H1 (cell line): ENCODE measurements at regions of chr15 and their contacts with region 1.

Region 1: GRCh38 chr15:66851226-66852071 is 149.4 kb downstream of the SMAD6 start:
- DNase-seq: peak; percentile 54 to 90
- H3K4me3 ChIP-seq: no peak overlapping the region
- H3K27ac ChIP-seq: no peak overlapping the region
- H3K4me1 ChIP-seq: no peaks in the 10 kb centered on the region; a peak in 2 of 7 replicates
- H3K27me3 ChIP-seq: peaks cover 0 to 11% (median 6%) of the 10 kb centered on the region in 4 experiments; a peak in 5 of 7 replicates
- CTCF ChIP-seq: peak; percentile 95 to 97 (median 96)
- EP300 ChIP-seq: no peak
- POLR2A ChIP-seq: no peak
- RAD21 ChIP-seq: peak; percentile 80 to 90

Region 2: GRCh38 chr15:66588537-66588936 is 262.9 kb before region 1 on chr15:
- CTCF ChIA-PET with region 1: interaction called, 31 read pairs
- POLR2A ChIA-PET with region 1: no interaction called
- DNase-seq: peak in 1 of 2 experiments; percentile 83
- H3K4me3 ChIP-seq: peak overlapping the region in 3 of 4 experiments; percentile 6 to 44 (median 19); a peak in 4 of 8 replicates
- H3K27ac ChIP-seq: no peak overlapping the region
- H3K4me1 ChIP-seq: peaks cover 0 to 5% (median 3%) of the 10 kb centered on the region in 4 experiments; a peak in 4 of 7 replicates
- H3K27me3 ChIP-seq: 0 out of 7 replicates have a peak, but pooled peaks cover 0 to 2% (median 0%) of the 10 kb centered on the region in 4 experiments
- CTCF ChIP-seq: peak; percentile 76 to 88 (median 78)
- EP300 ChIP-seq: no peak
- POLR2A ChIP-seq: no peak
- RAD21 ChIP-seq: peak; percentile 71 to 79

Region 3: DNA sequence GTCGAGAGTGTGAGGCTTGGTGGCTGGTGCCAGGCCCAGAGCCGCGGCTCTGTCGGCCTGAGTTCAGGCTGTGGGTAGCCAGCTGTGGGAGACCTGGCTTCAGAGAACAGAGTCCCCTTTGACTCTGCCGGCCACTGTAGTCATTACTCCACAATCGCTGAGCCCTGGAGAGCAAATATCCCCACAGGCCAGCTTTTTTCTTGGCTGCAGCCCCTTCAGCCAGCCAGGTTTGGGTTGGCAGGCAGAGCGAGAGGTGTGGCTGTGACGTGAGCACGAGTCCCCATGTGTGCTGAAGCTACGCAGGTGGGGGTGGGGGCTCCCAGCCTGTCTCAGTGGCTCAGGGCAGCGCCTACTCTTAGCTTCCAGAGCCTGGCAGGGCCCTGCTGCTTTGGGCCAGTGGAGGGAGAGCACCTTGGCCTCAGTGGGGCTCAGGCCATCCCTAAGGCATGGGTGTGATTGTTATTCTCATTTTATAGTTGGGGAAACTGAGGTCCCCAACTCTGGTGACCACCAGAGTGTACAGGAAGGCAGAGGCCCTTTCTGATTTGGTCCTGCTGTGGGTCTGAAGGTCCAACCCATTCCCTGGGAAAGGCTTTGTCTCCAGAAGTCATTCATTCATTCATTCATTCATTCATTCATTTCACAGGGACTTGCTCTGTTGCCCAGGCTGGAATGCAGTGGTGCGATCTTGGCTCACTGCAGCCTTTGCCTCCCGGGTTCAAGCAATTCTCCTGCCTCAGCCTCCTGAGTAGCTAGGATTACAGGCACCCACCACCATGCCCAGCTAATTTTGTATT is 240.0 kb before region 1 on chr15:
- CTCF ChIA-PET with region 1: interaction called, 105 read pairs
- POLR2A ChIA-PET with region 1: no interaction called
- DNase-seq: no peak
- H3K4me3 ChIP-seq: no peak overlapping the region
- H3K27ac ChIP-seq: no peak overlapping the region
- H3K4me1 ChIP-seq: no peaks in the 10 kb centered on the region; a peak in 1 of 7 replicates
- H3K27me3 ChIP-seq: no peaks in the 10 kb centered on the region
- CTCF ChIP-seq: no peak
- EP300 ChIP-seq: no peak
- POLR2A ChIP-seq: no peak
- RAD21 ChIP-seq: no peak

Region 4: DNA sequence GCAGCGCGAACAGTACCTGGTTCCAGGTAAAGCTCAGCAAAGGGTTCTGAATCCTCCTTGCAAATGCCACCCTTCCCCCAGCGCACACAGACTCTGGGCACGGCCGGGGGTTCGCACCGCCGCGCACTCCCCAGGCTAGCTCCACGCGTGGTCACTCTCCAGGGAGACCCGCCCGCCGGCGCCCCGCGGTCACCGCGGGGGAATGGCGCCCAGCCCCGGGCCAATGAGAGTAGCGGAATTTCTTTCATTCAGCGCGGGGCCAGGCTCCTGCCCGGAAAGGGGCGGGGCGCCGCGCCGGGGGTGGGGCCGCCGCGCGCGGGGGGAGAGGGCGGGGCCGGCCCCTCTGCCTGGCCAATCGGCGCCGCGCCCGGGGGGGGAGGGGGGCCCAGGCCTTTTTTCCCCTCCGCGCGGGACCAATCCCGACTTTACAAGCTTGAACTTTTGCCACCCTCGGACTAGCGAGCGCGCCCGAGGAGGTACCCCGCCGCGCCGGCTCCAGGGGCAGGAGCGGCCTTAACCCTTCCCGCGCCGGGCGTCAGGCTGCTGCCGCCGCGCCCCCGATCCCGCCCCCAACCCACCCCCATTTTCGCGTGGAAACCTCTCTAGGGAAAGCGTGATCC is 150.5 kb before region 1 on chr15:
- CTCF ChIA-PET with region 1: interaction called, 57 read pairs
- POLR2A ChIA-PET with region 1: no interaction called
- DNase-seq: peak; percentile 65 to 94
- H3K4me3 ChIP-seq: peak overlapping the region; percentile 54 to 83 (median 70)
- H3K27ac ChIP-seq: no peak overlapping the region
- H3K4me1 ChIP-seq: peaks cover 0 to 22% (median 9%) of the 10 kb centered on the region in 4 experiments; a peak in 6 of 7 replicates
- H3K27me3 ChIP-seq: peaks cover 18 to 45% (median 35%) of the 10 kb centered on the region in 4 experiments; a peak in 6 of 7 replicates
- CTCF ChIP-seq: no peak
- EP300 ChIP-seq: no peak
- POLR2A ChIP-seq: no peak
- RAD21 ChIP-seq: no peak

Region 5: DNA sequence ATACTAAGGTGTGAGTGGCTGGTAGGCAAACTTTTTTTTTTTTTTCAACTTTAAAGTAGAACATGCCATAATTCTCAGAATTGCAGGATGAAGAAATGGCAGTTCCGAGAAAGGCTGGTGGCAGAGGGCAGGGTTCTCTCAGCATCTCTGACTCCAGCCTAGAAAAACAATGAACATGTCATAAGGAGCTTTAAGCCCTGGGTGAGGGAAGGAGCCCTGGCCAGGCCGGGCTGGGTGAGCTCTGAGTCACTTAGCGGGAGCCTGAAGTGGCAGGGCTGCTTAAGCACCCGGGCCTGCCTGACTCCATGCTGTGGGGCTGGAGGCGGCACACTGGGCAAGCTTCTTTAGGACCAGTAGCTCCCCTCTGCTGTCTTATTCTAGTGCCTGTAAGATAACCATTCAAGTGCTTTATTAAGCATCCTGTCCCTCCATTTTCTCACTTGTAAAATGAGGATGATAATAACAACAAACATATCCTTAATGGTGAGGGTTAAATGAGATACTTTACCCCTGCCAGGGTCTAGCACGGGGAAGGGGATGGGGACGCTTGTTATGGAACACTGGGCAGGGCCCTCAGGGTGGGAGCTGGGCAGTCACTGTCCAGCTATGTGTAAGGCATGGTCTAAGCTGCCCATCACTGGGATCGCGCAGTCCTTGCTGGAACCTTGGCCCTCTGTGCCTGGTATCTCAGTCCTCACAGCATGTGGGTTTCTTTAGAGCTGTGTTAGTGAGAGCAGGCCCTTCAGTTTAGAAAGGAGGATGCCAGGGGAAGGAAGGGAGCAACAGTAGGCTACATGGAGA is 131.0 kb before region 1 on chr15:
- CTCF ChIA-PET with region 1: interaction called, 27 read pairs
- POLR2A ChIA-PET with region 1: no interaction called
- DNase-seq: no peak
- H3K4me3 ChIP-seq: no peak overlapping the region
- H3K27ac ChIP-seq: no peak overlapping the region
- H3K4me1 ChIP-seq: peaks cover 0 to 4% (median 2%) of the 10 kb centered on the region in 4 experiments; a peak in 4 of 7 replicates
- H3K27me3 ChIP-seq: no peaks in the 10 kb centered on the region
- CTCF ChIP-seq: no peak
- EP300 ChIP-seq: no peak
- POLR2A ChIP-seq: no peak
- RAD21 ChIP-seq: no peak

Region 6: GRCh38 chr15:66803182-66803729 is 48.2 kb before region 1 on chr15:
- CTCF ChIA-PET with region 1: interaction called, 201 read pairs
- POLR2A ChIA-PET with region 1: no interaction called
- DNase-seq: peak; percentile 56 to 73
- H3K4me3 ChIP-seq: no peak overlapping the region
- H3K27ac ChIP-seq: no peak overlapping the region
- H3K4me1 ChIP-seq: peaks cover 0 to 9% (median 7%) of the 10 kb centered on the region in 4 experiments; a peak in 5 of 7 replicates
- H3K27me3 ChIP-seq: no peaks in the 10 kb centered on the region
- CTCF ChIP-seq: no peak
- EP300 ChIP-seq: no peak
- POLR2A ChIP-seq: no peak
- RAD21 ChIP-seq: no peak; a peak in 1 of 4 replicates

Region 7: GRCh38 chr15:66824424-66824823 is 27.0 kb before region 1 on chr15:
- CTCF ChIA-PET with region 1: interaction called, 35 read pairs
- POLR2A ChIA-PET with region 1: no interaction called
- DNase-seq: no peak
- H3K4me3 ChIP-seq: no peak overlapping the region
- H3K27ac ChIP-seq: no peak overlapping the region
- H3K4me1 ChIP-seq: peaks cover 0 to 18% (median 7%) of the 10 kb centered on the region in 4 experiments; a peak in 6 of 7 replicates
- H3K27me3 ChIP-seq: no peaks in the 10 kb centered on the region
- CTCF ChIP-seq: no peak
- EP300 ChIP-seq: no peak
- POLR2A ChIP-seq: no peak
- RAD21 ChIP-seq: no peak